ENCODE measurements at regions of chr2 and their contacts with region 1.

Region 1: GRCh38 chr2:230913406-230914143 is 11.5 kb downstream of the GPR55 start:
- DNase-seq: peak; percentile 85
- H3K4me3 ChIP-seq: no peak overlapping the region
- H3K27ac ChIP-seq: no peak overlapping the region
- H3K4me1 ChIP-seq: no peaks in the 10 kb centered on the region; a peak in 1 of 4 replicates
- H3K27me3 ChIP-seq: peaks cover 12% of the 10 kb centered on the region; the same call in 1 of the 2 replicates
- CTCF ChIP-seq: peak; percentile 58
- EP300 ChIP-seq: no peak
- RAD21 ChIP-seq: peak; percentile 89

Region 2: DNA sequence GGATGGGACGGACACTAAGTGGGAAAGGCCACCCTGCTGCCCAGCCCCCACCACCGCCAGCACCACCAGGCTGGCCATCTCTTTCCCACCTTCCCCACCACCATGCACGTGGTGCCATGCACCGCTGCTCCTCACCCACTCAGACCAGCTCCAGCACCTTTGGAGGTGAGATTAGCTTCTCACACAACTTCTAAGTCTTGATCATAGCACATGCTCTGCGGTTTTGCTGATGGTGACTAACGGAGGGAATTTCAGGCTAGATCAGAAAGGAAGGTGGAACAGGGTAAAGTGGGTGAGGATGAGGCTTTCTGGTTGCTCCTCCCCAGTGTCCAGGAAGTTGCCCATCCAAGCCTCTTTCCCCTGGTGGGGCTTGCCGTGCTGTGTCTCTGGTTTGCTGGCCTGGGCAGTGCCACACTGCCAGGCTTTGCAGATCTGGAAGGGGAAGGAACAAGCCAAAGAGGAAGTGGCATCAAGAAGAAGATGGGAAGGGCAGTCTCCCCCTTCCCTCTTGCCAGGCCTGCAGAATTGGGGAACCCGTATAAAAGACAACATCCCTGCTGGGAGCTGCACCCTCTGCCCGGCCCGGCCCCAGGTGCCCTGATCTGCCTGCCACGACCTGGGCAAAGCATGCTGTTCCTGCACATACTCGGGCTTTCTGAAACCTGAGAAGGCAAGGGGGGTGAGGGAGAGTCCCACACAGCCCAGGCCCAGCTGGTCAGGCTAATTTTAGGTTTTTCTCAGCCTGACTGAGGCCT is 245.2 kb before region 1 on chr2:
- CTCF ChIA-PET with region 1: no interaction called
- POLR2A ChIA-PET with region 1: no interaction called
- DNase-seq: no peak
- H3K4me3 ChIP-seq: no peak overlapping the region
- H3K27ac ChIP-seq: no peak overlapping the region
- H3K4me1 ChIP-seq: peaks cover 0 to 4% of the 10 kb centered on the region in 2 experiments; a peak in 1 of 4 replicates
- H3K27me3 ChIP-seq: no peaks in the 10 kb centered on the region
- CTCF ChIP-seq: no peak
- EP300 ChIP-seq: no peak
- RAD21 ChIP-seq: no peak

Region 3: DNA sequence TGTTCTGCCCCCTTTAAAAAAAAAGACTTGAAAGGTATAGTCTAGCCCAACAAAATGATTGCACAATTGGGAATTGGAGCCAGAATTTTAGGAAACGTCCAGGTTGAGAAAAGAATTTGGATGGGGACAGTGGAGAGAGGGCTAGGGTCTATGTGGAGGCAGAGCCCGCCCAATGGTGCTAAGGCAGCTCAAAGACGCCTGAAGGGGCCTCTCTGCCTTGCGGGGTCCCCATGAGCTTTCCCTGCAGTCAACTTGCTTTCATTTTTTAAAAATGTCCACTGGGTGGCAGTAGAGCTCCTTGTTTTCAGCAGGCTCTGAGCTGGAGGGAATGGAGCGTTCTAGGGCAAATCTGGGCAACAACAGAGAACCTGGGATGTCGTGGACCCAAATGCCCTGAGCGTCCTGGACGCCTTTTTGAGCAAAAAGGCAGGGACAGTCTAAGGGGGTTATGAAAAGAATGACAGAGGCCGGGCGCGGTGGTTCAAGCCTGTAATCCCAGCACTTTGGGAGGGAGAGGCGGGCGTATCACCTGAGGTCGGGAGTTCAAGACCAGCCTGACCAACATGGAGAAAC is 89.1 kb before region 1 on chr2:
- CTCF ChIA-PET with region 1: interaction called, 20 read pairs
- POLR2A ChIA-PET with region 1: interaction called, 5 read pairs
- DNase-seq: peak; percentile 83
- H3K4me3 ChIP-seq: peak overlapping the region in 1 of 2 experiments; percentile 33; a peak in 2 of 4 replicates
- H3K27ac ChIP-seq: no peak overlapping the region
- H3K4me1 ChIP-seq: no peaks in the 10 kb centered on the region; a peak in 1 of 4 replicates
- H3K27me3 ChIP-seq: no peaks in the 10 kb centered on the region
- CTCF ChIP-seq: peak; percentile 72
- EP300 ChIP-seq: no peak
- RAD21 ChIP-seq: peak; percentile 94

Region 4: GRCh38 chr2:230847883-230848388 is 65.6 kb before region 1 on chr2:
- CTCF ChIA-PET with region 1: interaction called, 53 read pairs
- POLR2A ChIA-PET with region 1: no interaction called
- DNase-seq: peak; percentile 89
- H3K4me3 ChIP-seq: peak overlapping the region in 1 of 2 experiments; percentile 32; a peak in 1 of 4 replicates
- H3K27ac ChIP-seq: no peak overlapping the region
- H3K4me1 ChIP-seq: no peaks in the 10 kb centered on the region; a peak in 1 of 4 replicates
- H3K27me3 ChIP-seq: peaks cover 2% of the 10 kb centered on the region; the same call in 1 of the 2 replicates
- CTCF ChIP-seq: peak; percentile 84
- EP300 ChIP-seq: 0 out of 4 replicates have a peak, but pooled peaks of 1 of the 2 experiments have one; percentile 13
- RAD21 ChIP-seq: peak; percentile 76

Region 5: GRCh38 chr2:230885463-230886130 is 28.0 kb before region 1 on chr2:
- CTCF ChIA-PET with region 1: interaction called, 18 read pairs
- POLR2A ChIA-PET with region 1: no interaction called
- DNase-seq: peak; percentile 83
- H3K4me3 ChIP-seq: no peak overlapping the region
- H3K27ac ChIP-seq: peak overlapping the region in 1 of 2 experiments; percentile 41; a peak in 1 of 4 replicates
- H3K4me1 ChIP-seq: peaks cover 0 to 13% of the 10 kb centered on the region in 2 experiments; a peak in 2 of 4 replicates
- H3K27me3 ChIP-seq: no peaks in the 10 kb centered on the region
- CTCF ChIP-seq: no peak
- EP300 ChIP-seq: no peak
- RAD21 ChIP-seq: no peak

Region 6: DNA sequence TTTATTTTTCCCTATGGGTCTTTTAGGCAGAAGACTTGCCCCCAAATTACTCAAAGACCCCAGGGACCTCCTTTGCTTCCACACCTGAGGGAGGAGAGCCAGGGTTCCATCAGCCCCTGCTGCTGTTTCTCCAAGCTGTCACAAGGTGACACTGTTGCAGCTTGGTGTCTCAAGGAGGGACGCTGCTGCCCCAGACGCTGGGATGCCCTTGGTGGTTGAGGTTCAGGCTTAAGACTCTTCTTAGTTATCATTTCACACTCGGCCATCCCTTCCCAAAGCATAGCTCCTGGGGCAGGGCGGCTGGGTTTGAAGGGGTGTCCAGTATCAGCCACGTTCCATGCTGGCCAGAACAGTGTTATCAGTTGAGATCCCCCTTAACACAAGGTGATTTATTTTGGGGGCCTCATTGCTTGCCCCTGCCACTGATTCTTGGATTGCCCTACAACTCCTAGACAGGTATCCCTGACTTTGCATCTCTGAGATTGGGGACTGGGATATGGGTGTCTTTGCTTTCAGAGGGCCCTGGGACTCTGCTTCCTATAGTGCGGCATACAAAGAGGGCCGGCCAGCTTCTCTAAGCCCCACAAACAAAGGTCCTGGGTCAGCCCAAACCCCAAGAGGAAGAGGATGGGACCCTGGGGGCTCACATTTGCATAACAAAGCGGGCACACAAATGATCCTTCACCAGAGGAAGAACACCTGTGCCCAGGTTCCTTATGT is 11.2 kb before region 1 on chr2:
- CTCF ChIA-PET with region 1: interaction called, 31 read pairs
- POLR2A ChIA-PET with region 1: no interaction called
- DNase-seq: peak; percentile 49
- H3K4me3 ChIP-seq: no peak overlapping the region
- H3K27ac ChIP-seq: no peak overlapping the region
- H3K4me1 ChIP-seq: no peaks in the 10 kb centered on the region; a peak in 1 of 4 replicates
- H3K27me3 ChIP-seq: peaks cover 19% of the 10 kb centered on the region; the same call in 1 of the 2 replicates
- CTCF ChIP-seq: peak; percentile 67
- EP300 ChIP-seq: no peak
- RAD21 ChIP-seq: peak; percentile 63

Measured in SK-N-SH (cell line).